ENCODE measurements at regions of chr17 and their contacts with region 1.

Region 1: DNA sequence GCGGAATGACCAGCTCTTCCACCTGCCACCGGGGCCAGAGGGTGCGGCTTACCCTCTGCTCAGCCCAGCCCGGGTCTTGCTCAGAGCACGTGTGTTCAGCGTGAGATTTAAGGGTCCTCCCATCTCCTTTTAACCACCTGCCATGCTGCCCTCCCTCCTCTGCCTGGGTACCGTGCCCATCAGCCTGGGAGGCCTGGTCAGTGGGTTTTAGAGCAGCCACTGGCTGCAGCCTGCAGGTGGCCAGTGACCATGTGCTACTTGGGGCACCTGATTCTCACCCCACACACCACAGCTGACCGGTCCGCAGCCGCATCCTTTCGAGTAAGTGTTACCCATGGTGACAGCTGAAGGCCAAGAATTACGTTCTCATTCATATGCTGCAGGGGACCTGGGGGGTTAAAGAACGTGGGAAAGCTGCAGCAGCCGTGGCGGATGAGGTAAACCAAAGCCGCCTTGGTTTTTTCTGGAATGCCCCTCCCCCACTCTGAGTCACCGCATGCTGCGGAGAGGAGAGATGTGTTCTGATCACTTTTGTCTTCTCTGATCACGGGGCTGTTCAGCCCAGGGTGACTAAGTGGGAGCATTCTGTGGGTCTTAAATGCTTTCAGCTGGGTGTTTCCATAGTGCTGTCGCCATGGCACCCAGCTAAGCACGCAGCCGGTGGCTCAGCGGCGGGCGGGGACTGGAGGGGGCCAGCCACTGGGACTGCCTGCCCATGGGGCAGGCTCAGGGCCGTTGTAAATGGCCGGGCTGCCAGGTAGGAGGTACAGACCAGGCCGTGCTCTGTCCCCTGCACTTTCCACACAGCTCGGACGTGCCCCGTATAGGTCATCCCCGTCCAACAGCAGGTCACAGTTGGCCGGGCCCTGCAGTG is 59.8 kb downstream of the BAIAP2 start:
- DNase-seq: peak; percentile 77 to 94 (median 82)
- ATAC-seq: peak; percentile 76
- H3K4me3 ChIP-seq: no peak overlapping the region
- H3K27ac ChIP-seq: peak overlapping the region; percentile 74; the same call in 2 of the 3 replicates
- H3K4me1 ChIP-seq: peaks cover 64 to 100% of the 10 kb centered on the region in 2 experiments
- H3K27me3 ChIP-seq: no peaks in the 10 kb centered on the region
- CTCF ChIP-seq: 0 out of 6 replicates have a peak, but pooled peaks of 1 of the 3 experiments have one; percentile 13
- EP300 ChIP-seq: peak; percentile 79
- POLR2A ChIP-seq: no peak
- RAD21 ChIP-seq: peak in 1 of 2 experiments; percentile 25; a peak in 1 of 4 replicates

Region 2: DNA sequence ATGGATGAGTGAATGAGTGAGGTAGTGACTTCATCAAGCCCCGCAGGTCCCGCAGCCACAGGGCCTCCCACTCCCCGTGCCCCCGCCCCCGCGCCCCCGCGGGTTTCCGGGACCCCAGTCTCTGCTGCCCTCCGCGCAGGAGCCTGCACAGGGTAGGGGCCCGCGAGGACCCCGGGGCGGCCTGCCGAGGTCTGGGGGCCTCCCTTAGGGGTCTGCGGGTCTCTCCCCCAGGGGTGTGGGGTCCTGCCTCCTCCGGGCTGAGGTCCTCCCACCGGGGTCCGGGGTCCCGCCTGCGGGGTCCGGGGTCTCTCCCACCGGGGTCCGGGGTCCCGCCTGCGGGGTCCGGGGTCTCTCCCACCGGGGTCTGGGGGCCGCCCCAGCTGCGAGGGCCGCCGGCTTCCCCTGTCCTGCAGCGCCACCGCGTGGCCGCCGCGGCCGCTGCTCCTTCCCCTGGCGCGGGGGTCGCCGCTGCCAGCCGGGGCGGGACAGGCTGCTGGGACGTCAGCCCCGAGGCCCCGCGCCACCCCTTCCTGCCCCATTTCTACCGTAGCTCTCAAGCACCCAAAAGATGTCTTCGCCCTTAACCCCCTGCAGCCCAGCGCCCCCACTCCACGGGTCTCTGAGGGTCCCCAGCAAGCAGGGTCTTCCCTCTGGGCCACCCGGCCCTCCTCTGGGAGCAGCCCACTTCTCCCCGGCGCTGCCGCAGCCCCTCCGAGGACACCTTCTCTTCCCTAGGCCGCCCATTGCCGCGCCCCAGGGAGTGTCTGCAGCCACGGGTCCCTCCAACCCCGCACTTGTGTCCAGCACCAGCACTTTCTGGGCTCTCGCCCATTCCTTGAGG is 113.5 kb before region 1 on chr17:
- CTCF ChIA-PET with region 1: no interaction called
- POLR2A ChIA-PET with region 1: interaction called, 3 read pairs
- in situ Hi-C with region 1: loop called (anchors 5 kb)
- intact Hi-C with region 1: no loop called
- DNase-seq: peak in 3 of 4 experiments; percentile 80 to 83 (median 82)
- ATAC-seq: peak; percentile 84
- H3K4me3 ChIP-seq: peak overlapping the region; percentile 22; the same call in 1 of the 2 replicates
- H3K27ac ChIP-seq: no peak overlapping the region
- H3K4me1 ChIP-seq: peaks cover 0 to 38% of the 10 kb centered on the region in 2 experiments; a peak in 3 of 5 replicates
- H3K27me3 ChIP-seq: peaks cover 12 to 31% of the 10 kb centered on the region in 2 experiments; a peak in 4 of 5 replicates
- CTCF ChIP-seq: peak; percentile 59 to 77 (median 61)
- EP300 ChIP-seq: no peak
- POLR2A ChIP-seq: no peak
- RAD21 ChIP-seq: peak; percentile 75 to 88

Region 3: GRCh38 chr17:80991645-80992076 is 103.1 kb before region 1 on chr17 and contains the start of gene CHMP6:
- CTCF ChIA-PET with region 1: interaction called, 3 read pairs
- POLR2A ChIA-PET with region 1: no interaction called
- in situ Hi-C with region 1: loop called (anchors 5 kb)
- intact Hi-C with region 1: loop called (anchors 1 kb)
- DNase-seq: peak; percentile 86 to 92 (median 90)
- ATAC-seq: peak; percentile 41
- H3K4me3 ChIP-seq: peak within 1 kb of the TSS; percentile 97
- H3K27ac ChIP-seq: peak within 1 kb of the TSS; percentile 70
- H3K4me1 ChIP-seq: peaks cover 9 to 75% of the 10 kb centered on the region in 2 experiments; a peak in 4 of 5 replicates
- H3K27me3 ChIP-seq: no peaks in the 10 kb centered on the region
- CTCF ChIP-seq: peak in 2 of 3 experiments; percentile 38 to 66; a peak in 3 of 6 replicates
- EP300 ChIP-seq: no peak
- POLR2A ChIP-seq: no peak
- RAD21 ChIP-seq: peak in 1 of 2 experiments; percentile 31; a peak in 2 of 4 replicates
- polyA plus RNA-seq, gene CHMP6: 0.25 to 1.8 TPM

Region 4: GRCh38 chr17:81018044-81018802 is 76.5 kb before region 1 on chr17:
- CTCF ChIA-PET with region 1: interaction called, 3 read pairs
- POLR2A ChIA-PET with region 1: interaction called, 3 read pairs
- in situ Hi-C with region 1: no loop called
- intact Hi-C with region 1: loop called (anchors 5 kb)
- DNase-seq: peak; percentile 55 to 92 (median 74)
- ATAC-seq: peak; percentile 92
- H3K4me3 ChIP-seq: peak overlapping the region; percentile 53
- H3K27ac ChIP-seq: peak overlapping the region; percentile 92
- H3K4me1 ChIP-seq: peaks cover 41 to 46% of the 10 kb centered on the region in 2 experiments
- H3K27me3 ChIP-seq: no peaks in the 10 kb centered on the region
- CTCF ChIP-seq: no peak
- EP300 ChIP-seq: peak; percentile 84
- POLR2A ChIP-seq: peak; percentile 86
- RAD21 ChIP-seq: no peak

Region 5: GRCh38 chr17:81040791-81041337 is 53.9 kb before region 1 on chr17:
- CTCF ChIA-PET with region 1: no interaction called
- POLR2A ChIA-PET with region 1: interaction called, 5 read pairs
- in situ Hi-C with region 1: no loop called
- intact Hi-C with region 1: loop called (anchors 5 kb)
- DNase-seq: peak; percentile 65 to 83 (median 72)
- ATAC-seq: peak; percentile 95
- H3K4me3 ChIP-seq: no peak overlapping the region; the same call in 1 of the 2 replicates
- H3K27ac ChIP-seq: no peak overlapping the region
- H3K4me1 ChIP-seq: peaks cover 19 to 84% of the 10 kb centered on the region in 2 experiments
- H3K27me3 ChIP-seq: no peaks in the 10 kb centered on the region
- CTCF ChIP-seq: peak; percentile 84 to 96 (median 85)
- EP300 ChIP-seq: no peak
- POLR2A ChIP-seq: no peak
- RAD21 ChIP-seq: peak in 1 of 2 experiments; percentile 64; a peak in 2 of 4 replicates

Region 6: GRCh38 chr17:81057079-81057730 is 37.5 kb before region 1 on chr17:
- CTCF ChIA-PET with region 1: no interaction called
- POLR2A ChIA-PET with region 1: no interaction called
- in situ Hi-C with region 1: no loop called
- intact Hi-C with region 1: loop called (anchors 2 kb)
- DNase-seq: peak; percentile 90 to 95 (median 92)
- ATAC-seq: peak; percentile 98
- H3K4me3 ChIP-seq: no peak overlapping the region
- H3K27ac ChIP-seq: peak overlapping the region; percentile 9; the same call in 2 of the 3 replicates
- H3K4me1 ChIP-seq: peaks cover 17 to 63% of the 10 kb centered on the region in 2 experiments
- H3K27me3 ChIP-seq: no peaks in the 10 kb centered on the region
- CTCF ChIP-seq: peak in 2 of 3 experiments; percentile 3 to 28; a peak in 3 of 6 replicates
- EP300 ChIP-seq: peak; percentile 40; the same call in 1 of the 2 replicates
- POLR2A ChIP-seq: no peak
- RAD21 ChIP-seq: peak; percentile 20 to 49; a peak in 3 of 4 replicates

Region 7: GRCh38 chr17:81150377-81151077 is 55.8 kb after region 1 on chr17:
- CTCF ChIA-PET with region 1: no interaction called
- POLR2A ChIA-PET with region 1: no interaction called
- in situ Hi-C with region 1: no loop called
- intact Hi-C with region 1: no loop called
- DNase-seq: no peak
- ATAC-seq: no peak
- H3K4me3 ChIP-seq: no peak overlapping the region
- H3K27ac ChIP-seq: no peak overlapping the region
- H3K4me1 ChIP-seq: peaks cover 6 to 19% of the 10 kb centered on the region in 2 experiments; a peak in 3 of 5 replicates
- H3K27me3 ChIP-seq: peaks cover 18 to 57% of the 10 kb centered on the region in 2 experiments; a peak in 4 of 5 replicates
- CTCF ChIP-seq: no peak
- EP300 ChIP-seq: no peak
- POLR2A ChIP-seq: no peak
- RAD21 ChIP-seq: no peak

Region 8: DNA sequence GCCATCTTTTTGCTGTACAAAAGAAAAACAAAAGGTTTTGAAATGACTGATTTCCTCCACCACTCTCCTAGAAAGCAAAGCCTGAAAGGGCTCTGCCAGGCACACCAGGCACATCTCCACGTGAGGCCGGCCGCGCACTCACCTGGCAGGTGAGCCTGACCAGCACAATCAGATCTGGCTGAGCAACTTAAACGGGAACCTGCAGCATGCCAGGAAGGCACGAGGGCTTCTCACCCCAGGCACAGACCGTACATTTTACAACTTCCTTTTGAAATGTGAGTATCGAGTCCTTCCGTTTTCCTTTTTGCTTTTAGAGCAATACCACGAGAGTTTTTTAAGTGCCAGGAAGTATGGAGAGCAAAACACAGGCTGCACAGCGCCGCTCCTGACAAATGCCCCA is 177.9 kb after region 1 on chr17:
- CTCF ChIA-PET with region 1: no interaction called
- POLR2A ChIA-PET with region 1: no interaction called
- in situ Hi-C with region 1: no loop called
- intact Hi-C with region 1: no loop called
- DNase-seq: no peak
- ATAC-seq: no peak
- H3K4me3 ChIP-seq: no peak overlapping the region
- H3K27ac ChIP-seq: no peak overlapping the region
- H3K4me1 ChIP-seq: peaks cover 2 to 23% of the 10 kb centered on the region in 2 experiments; a peak in 3 of 5 replicates
- H3K27me3 ChIP-seq: no peaks in the 10 kb centered on the region
- CTCF ChIP-seq: no peak
- EP300 ChIP-seq: no peak
- POLR2A ChIP-seq: no peak
- RAD21 ChIP-seq: no peak

Measured in K562 (cell line).